K562 (cell line): ENCODE measurements at regions of chr5 and their contacts with region 1.

Region 1: GRCh38 chr5:78912085-78912771 is 72.9 kb downstream of the ARSB start:
- DNase-seq: no peak
- ATAC-seq: no peak
- H3K4me3 ChIP-seq: no peak overlapping the region
- H3K27ac ChIP-seq: no peak overlapping the region
- H3K4me1 ChIP-seq: no peaks in the 10 kb centered on the region; a peak in 1 of 5 replicates
- H3K27me3 ChIP-seq: peaks cover 0 to 6% of the 10 kb centered on the region in 2 experiments; a peak in 2 of 5 replicates
- CTCF ChIP-seq: no peak
- EP300 ChIP-seq: no peak
- POLR2A ChIP-seq: no peak
- RAD21 ChIP-seq: no peak

Region 2: DNA sequence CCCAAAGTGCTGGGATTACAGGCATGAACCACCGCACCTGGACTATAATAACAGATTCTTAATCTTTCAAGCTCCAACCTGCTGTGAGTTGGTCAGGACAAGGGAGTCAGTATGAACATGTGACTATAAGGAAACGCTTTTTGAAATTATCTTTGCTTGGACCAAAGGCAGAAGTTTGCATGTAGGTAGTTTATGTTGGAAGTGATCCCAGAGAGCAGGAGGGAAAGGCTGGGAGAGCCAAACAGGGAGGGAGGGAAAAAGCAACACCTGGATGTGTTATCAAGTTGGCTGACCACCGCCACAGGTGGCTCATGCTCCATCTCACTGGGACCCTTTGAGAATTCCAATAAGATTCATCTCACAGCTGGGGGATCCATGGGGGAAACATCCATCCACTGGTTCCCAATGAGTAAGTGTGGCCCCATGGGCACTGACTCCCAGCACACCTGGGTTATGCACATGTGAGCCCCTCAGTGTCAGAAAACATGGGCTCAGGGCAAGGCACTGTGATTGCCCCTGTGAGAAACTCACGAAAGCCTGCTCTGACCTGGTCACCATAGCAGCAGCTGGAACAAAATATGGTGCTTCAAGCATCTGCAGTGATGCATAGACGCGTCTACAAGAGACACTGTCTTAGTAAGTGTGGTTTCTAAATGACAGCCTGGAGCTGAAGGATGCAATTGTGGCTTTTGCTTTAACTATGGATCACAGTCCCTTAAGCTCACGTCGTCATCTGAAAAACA is 10.8 kb after region 1 on chr5:
- CTCF ChIA-PET with region 1: no interaction called
- POLR2A ChIA-PET with region 1: interaction called, 11 read pairs
- in situ Hi-C with region 1: no loop called
- intact Hi-C with region 1: no loop called
- DNase-seq: no peak
- ATAC-seq: no peak
- H3K4me3 ChIP-seq: no peak overlapping the region
- H3K27ac ChIP-seq: no peak overlapping the region
- H3K4me1 ChIP-seq: no peaks in the 10 kb centered on the region
- H3K27me3 ChIP-seq: peaks cover 11 to 19% of the 10 kb centered on the region in 2 experiments; a peak in 2 of 5 replicates
- CTCF ChIP-seq: no peak
- EP300 ChIP-seq: no peak
- POLR2A ChIP-seq: no peak
- RAD21 ChIP-seq: no peak

Region 3: DNA sequence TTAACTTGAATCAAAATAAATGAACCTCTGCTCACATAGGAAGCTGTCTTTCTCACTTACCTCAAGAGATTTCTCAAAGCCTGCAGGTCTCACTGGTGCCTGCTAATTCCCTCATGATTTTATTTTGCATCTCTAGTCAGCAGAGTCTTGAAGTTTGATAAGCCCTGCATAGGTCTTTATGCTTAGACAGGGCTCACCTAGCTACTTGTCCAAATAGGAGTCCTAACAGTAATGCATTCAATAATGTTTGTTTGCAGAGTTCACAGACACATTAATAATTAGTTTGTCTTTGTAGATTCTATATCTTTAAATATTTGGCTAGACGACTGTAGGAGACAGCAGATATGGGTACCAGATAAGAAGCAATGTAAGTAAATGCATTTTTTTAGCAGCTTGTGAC is 24.3 kb after region 1 on chr5:
- CTCF ChIA-PET with region 1: no interaction called
- POLR2A ChIA-PET with region 1: no interaction called
- in situ Hi-C with region 1: no loop called
- intact Hi-C with region 1: no loop called
- DNase-seq: no peak
- ATAC-seq: no peak
- H3K4me3 ChIP-seq: no peak overlapping the region
- H3K27ac ChIP-seq: no peak overlapping the region
- H3K4me1 ChIP-seq: no peaks in the 10 kb centered on the region
- H3K27me3 ChIP-seq: no peaks in the 10 kb centered on the region; a peak in 1 of 5 replicates
- CTCF ChIP-seq: no peak
- EP300 ChIP-seq: no peak
- POLR2A ChIP-seq: no peak
- RAD21 ChIP-seq: no peak